ENCODE measurements at regions of chr2 and their contacts with region 1.

Region 1: GRCh38 chr2:185738679-185739472 is at the start of gene FSIP2:
- DNase-seq: peak; percentile 74
- H3K4me3 ChIP-seq: peak within 1 kb of the TSS; percentile 56 to 89 (median 63)
- H3K27ac ChIP-seq: no peak within 1 kb of the TSS
- H3K4me1 ChIP-seq: no peaks in the 10 kb centered on the region
- H3K27me3 ChIP-seq: no peaks in the 10 kb centered on the region
- CTCF ChIP-seq: peak; percentile 83 to 100
- total RNA-seq, gene FSIP2: 1.1 to 5.3 TPM

Region 2: DNA sequence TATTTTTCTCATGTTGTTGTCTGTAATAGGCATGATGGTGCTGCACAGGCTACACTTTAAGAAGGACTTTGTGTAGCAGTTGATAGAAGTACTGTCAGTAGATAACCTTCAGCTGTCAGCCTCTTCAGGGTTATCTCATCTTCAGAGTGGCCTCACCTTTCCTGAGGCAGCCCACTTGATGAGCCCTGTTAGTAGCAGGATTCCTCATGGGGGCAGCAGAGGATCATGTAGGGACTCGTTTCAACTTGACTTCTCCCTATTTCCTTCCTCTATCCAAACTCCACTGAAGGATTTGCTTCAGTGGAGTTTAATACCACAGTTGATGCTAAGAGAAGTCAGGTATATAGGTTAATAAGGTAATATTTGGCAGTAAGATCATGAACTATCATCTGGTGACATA is 530.6 kb before region 1 on chr2:
- CTCF ChIA-PET with region 1: no interaction called
- dilution Hi-C with region 1: no loop called
- in situ Hi-C with region 1: no loop called
- intact Hi-C with region 1: loop called (anchors 1 kb)
- DNase-seq: peak; percentile 38
- H3K4me3 ChIP-seq: no peak overlapping the region
- H3K27ac ChIP-seq: no peak overlapping the region
- H3K4me1 ChIP-seq: no peaks in the 10 kb centered on the region
- H3K27me3 ChIP-seq: peaks cover 2% of the 10 kb centered on the region
- CTCF ChIP-seq: peak; percentile 65 to 69

Region 3: GRCh38 chr2:185404578-185404977 is 334.3 kb before region 1 on chr2:
- CTCF ChIA-PET with region 1: no interaction called
- dilution Hi-C with region 1: no loop called
- in situ Hi-C with region 1: no loop called
- intact Hi-C with region 1: loop called (anchors 5 kb)
- DNase-seq: no peak
- H3K4me3 ChIP-seq: no peak overlapping the region
- H3K27ac ChIP-seq: no peak overlapping the region
- H3K4me1 ChIP-seq: no peaks in the 10 kb centered on the region
- H3K27me3 ChIP-seq: no peaks in the 10 kb centered on the region
- CTCF ChIP-seq: peak in 1 of 2 donors; percentile 15

Region 4: DNA sequence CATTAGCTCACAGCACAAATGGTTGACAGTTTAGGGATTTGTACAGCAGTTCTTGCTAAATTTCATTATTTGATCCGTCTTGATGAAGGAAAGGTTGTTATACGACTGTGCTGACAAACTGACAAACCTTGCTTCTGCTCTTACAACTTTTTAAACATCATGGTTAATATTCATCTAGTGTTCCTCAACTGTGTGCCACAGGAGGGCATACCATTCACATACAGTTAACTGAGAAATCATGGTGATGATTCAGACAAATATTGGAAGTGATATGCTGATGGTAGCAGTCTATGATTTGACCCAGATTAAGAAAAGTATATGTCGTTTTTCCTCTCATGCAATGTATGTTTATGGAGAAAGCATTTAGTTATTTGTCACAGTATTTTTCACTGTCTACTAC is 130.1 kb before region 1 on chr2:
- CTCF ChIA-PET with region 1: no interaction called
- dilution Hi-C with region 1: no loop called
- in situ Hi-C with region 1: no loop called
- intact Hi-C with region 1: loop called (anchors 2 kb)
- DNase-seq: no peak
- H3K4me3 ChIP-seq: no peak overlapping the region
- H3K27ac ChIP-seq: no peak overlapping the region
- H3K4me1 ChIP-seq: no peaks in the 10 kb centered on the region
- H3K27me3 ChIP-seq: no peaks in the 10 kb centered on the region
- CTCF ChIP-seq: peak; percentile 29 to 52

Region 5: GRCh38 chr2:185875136-185875931 is 136.5 kb after region 1 on chr2:
- CTCF ChIA-PET with region 1: no interaction called
- dilution Hi-C with region 1: no loop called
- in situ Hi-C with region 1: no loop called
- intact Hi-C with region 1: no loop called
- DNase-seq: no peak
- H3K4me3 ChIP-seq: no peak overlapping the region
- H3K27ac ChIP-seq: no peak overlapping the region
- H3K4me1 ChIP-seq: no peaks in the 10 kb centered on the region
- H3K27me3 ChIP-seq: no peaks in the 10 kb centered on the region
- CTCF ChIP-seq: no peak

Region 6: DNA sequence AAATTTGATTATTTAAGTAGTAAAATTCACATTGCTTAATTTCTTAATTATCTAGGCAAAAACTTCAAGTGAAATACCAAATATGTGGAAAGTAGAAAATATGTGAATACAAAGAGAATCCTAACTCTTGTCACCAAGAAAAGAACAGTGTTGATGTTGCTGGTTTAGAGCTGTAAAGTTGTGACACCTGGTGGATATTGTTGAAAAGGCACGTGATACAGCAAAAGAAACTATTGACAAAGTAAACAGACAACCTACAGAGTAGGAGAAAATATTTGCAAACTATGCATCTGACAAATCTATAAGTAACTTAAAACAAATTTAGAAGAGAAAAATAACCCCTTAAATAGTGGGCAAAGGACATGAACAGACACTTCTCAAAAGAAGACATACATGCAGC is 721.6 kb after region 1 on chr2:
- CTCF ChIA-PET with region 1: no interaction called
- dilution Hi-C with region 1: no loop called
- in situ Hi-C with region 1: loop called in 1 of 2 experiments (anchors 25 kb)
- intact Hi-C with region 1: loop called (anchors 2 kb)
- DNase-seq: no peak
- H3K4me3 ChIP-seq: no peak overlapping the region
- H3K27ac ChIP-seq: no peak overlapping the region
- H3K4me1 ChIP-seq: peaks cover 15% of the 10 kb centered on the region
- H3K27me3 ChIP-seq: no peaks in the 10 kb centered on the region
- CTCF ChIP-seq: peak; percentile 50 to 65